Colonic mucosa (tissue), 4 donors: ENCODE measurements at regions of chr5 and their contacts with region 1.

Region 1: DNA sequence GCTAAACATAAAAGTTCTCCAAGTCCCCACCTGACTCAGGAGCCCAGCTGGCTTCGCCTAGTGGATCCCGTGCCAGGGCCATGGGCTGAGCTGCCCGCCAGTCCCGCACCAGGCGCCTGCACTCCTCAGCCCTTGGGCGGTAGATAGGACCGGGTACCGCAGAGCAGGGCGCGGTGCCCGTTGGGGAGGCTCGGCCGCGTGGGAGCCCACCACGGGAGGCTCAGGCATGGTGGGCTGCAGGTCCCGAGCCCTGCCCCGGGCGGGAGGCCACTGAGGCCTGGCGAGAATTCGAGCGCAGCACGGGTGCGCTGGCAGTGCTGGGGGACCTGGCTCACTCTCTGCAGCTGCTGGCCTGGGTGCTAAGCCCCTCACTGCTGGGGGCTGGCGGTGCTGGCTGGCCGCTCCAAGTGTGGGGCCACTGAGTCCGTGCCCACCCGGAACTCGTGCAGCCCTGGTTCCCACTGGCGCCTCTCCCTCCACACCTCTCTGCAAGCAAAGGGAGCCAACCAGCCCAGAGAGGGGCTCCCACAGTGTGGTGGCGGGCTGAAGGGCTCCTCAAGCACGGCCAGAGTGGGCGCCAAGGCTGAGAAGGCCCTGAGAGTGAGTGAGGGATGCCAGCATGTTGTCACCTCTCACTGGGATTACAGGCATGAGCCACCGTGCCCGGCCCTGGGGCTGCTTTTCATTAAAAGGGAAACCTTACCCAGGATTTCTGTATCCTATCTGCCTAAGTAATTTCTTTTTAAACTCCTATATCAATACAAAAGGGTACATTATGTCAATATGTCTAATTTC is 9.7 kb upstream of the SPZ1 start:
- DNase-seq: no peak
- H3K4me3 ChIP-seq: no peak overlapping the region
- H3K27ac ChIP-seq: no peak overlapping the region
- H3K4me1 ChIP-seq: no peaks in the 10 kb centered on the region
- H3K27me3 ChIP-seq: no peaks in the 10 kb centered on the region
- CTCF ChIP-seq: no peak

Region 2: DNA sequence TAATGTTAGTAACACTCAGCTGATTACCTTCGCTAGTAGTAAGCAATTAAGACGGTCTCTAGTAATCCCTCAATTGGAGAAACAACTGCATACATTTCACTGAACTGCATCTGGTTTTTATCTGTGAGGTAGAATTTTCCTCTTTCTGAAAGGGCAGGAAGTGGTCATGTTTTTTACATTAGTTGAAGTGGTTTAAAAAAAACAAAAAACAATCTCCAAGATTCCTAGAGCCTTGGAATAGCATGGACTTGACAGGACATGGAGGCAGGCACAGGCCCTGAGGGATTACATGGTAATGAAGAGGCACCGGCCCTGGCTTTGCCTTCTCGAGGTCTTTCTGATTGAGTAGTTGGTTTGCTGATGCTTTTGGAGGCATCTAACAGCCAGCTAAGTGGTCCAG is 249.1 kb before region 1 on chr5:
- intact Hi-C with region 1: no loop called
- DNase-seq: no peak
- H3K4me3 ChIP-seq: no peak overlapping the region
- H3K27ac ChIP-seq: no peak overlapping the region
- H3K4me1 ChIP-seq: no peaks in the 10 kb centered on the region
- H3K27me3 ChIP-seq: no peaks in the 10 kb centered on the region
- CTCF ChIP-seq: no peak

Region 3: DNA sequence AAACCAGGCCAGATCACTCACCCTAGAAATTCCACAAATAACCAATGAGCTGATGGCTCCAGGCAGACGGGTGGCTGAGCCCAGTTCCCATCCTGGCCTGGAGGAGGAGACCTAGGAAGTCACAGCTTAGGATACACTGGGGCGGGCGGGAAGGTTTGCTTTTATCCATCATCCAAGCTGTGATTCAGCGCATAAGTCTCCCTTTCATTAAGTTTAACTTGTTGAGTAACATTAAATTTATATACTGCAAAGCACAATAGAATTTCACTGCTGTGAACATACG is 219.2 kb before region 1 on chr5:
- intact Hi-C with region 1: loop called (anchors 2 kb)
- DNase-seq: no peak
- H3K4me3 ChIP-seq: no peak overlapping the region
- H3K27ac ChIP-seq: no peak overlapping the region
- H3K4me1 ChIP-seq: no peaks in the 10 kb centered on the region
- H3K27me3 ChIP-seq: no peaks in the 10 kb centered on the region
- CTCF ChIP-seq: no peak